K562 (cell line): ENCODE measurements at regions of chr12 and their contacts with region 1.

Region 1: DNA sequence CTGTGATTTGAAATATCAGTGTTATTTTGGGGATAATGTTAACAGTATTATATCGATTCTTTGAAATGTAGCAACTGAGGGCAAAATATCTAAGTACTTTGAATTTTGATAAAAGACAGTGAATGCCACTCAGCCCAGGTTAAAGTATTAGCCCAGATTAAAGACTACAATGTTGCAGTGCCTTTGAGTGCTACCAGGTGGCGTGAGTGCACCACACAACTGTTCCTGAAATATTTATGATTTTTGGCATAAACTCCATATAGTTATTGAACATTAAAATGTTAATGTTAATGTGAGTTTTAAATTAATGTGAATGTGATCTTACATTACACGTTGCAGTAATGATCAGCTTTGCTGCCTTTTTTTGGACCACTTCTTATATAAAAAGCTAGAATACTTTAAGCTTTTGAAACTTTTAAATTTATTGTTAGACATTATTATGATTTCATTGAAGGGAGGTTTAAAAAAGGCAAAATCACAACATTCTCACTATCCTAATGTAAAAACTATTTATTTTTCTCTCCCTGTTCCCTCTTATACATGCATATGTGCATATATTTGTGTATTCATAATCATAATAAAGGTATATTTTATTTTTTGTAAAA is 22.5 kb downstream of the MRPS35 start:
- DNase-seq: peak; percentile 37 to 49 (median 40)
- ATAC-seq: peak; percentile 77
- H3K4me3 ChIP-seq: no peak overlapping the region
- H3K27ac ChIP-seq: no peak overlapping the region
- H3K4me1 ChIP-seq: no peaks in the 10 kb centered on the region
- H3K27me3 ChIP-seq: no peaks in the 10 kb centered on the region
- CTCF ChIP-seq: peak; percentile 75 to 89 (median 80)
- EP300 ChIP-seq: no peak
- POLR2A ChIP-seq: no peak
- RAD21 ChIP-seq: peak; percentile 91 to 93

Region 2: GRCh38 chr12:27635349-27635972 is 97.7 kb before region 1 on chr12:
- CTCF ChIA-PET with region 1: no interaction called
- POLR2A ChIA-PET with region 1: no interaction called
- in situ Hi-C with region 1: no loop called
- intact Hi-C with region 1: no loop called
- DNase-seq: peak in 2 of 4 experiments; percentile 18 to 21
- ATAC-seq: peak; percentile 42; the same call in 1 of the 3 replicates
- H3K4me3 ChIP-seq: no peak overlapping the region
- H3K27ac ChIP-seq: no peak overlapping the region
- H3K4me1 ChIP-seq: no peaks in the 10 kb centered on the region
- H3K27me3 ChIP-seq: peaks cover 0 to 5% of the 10 kb centered on the region in 2 experiments; a peak in 1 of 5 replicates
- CTCF ChIP-seq: peak; percentile 34 to 67 (median 42); a peak in 4 of 6 replicates
- EP300 ChIP-seq: no peak
- POLR2A ChIP-seq: no peak
- RAD21 ChIP-seq: peak; percentile 64 to 76

Region 3: DNA sequence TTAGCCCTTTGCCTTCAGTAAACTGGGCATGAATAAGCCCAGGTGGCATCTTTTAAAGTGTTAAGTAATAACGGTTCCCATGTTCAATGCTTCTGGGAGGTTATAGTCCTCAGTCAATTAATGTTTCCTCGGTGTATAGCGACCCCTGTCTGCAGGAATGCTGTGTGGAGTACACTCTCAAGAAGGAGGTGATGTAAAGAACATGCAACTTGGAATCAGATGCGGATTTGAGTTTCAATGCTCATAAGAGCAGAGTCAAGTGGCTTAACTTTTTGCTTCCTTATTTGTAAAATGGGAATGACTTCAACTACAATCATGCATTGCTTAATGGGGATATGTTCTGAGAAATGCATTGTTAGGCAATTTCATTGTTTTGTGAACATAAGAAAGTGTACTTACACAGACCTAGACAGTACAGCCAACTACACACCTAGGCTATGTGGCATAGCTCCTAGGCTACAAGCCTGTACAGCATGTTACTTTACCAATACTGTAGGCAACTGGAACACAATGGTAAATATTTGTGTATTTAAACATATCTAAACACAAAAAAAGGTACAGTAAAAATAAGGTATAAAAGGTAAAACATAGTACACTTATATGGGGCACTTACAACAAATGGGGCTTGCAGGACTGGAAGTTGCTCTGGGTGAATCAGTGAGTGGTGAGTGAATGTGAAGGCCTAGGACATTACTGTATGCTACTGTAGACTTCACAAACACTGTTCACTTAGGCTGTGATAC is 29.3 kb before region 1 on chr12:
- CTCF ChIA-PET with region 1: no interaction called
- POLR2A ChIA-PET with region 1: no interaction called
- in situ Hi-C with region 1: no loop called
- intact Hi-C with region 1: no loop called
- DNase-seq: peak; percentile 47 to 82 (median 58)
- ATAC-seq: peak; percentile 96
- H3K4me3 ChIP-seq: no peak overlapping the region
- H3K27ac ChIP-seq: no peak overlapping the region
- H3K4me1 ChIP-seq: peaks cover 0 to 3% of the 10 kb centered on the region in 2 experiments; a peak in 1 of 5 replicates
- H3K27me3 ChIP-seq: peaks cover 6 to 19% of the 10 kb centered on the region in 2 experiments; a peak in 4 of 5 replicates
- CTCF ChIP-seq: peak; percentile 79 to 91 (median 82)
- EP300 ChIP-seq: peak; percentile 82
- POLR2A ChIP-seq: no peak
- RAD21 ChIP-seq: peak; percentile 78 to 80

Region 4: DNA sequence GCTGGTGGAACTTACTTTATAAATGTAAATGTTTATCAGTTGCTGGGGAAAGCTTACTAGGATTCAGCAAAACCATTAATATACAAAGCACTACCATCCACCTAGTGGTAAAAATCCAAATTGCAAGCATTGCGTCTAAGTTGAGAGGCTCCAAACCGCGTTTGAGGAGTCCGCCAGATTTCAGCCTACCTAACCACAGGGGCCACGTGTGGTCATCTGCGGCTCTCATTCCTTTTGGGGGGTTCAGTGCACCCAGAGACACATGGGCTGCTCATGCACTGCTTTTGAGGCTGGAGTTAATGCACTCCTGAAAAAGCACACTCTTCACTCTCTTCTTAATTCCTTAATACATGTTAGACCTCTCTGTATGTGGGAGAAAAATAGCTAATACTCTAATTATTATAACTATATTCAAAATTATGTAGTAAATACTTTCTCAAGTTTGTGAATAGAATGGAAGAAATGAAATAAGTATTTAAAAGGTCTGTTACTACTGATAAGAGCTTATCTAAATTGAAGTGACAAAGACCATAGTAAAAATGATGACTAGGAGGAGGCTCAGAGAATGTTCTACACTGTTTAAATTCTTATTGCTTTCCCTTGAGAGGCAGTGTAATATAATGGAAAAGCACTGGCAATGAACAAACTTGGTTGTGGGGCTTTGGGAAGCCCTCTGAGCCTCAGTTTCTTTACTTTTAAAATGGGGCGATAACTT is 88.3 kb after region 1 on chr12:
- CTCF ChIA-PET with region 1: interaction called, 3 read pairs
- POLR2A ChIA-PET with region 1: no interaction called
- in situ Hi-C with region 1: no loop called
- intact Hi-C with region 1: loop called (anchors 2 kb)
- DNase-seq: peak; percentile 65 to 86 (median 70)
- ATAC-seq: peak; percentile 86
- H3K4me3 ChIP-seq: no peak overlapping the region
- H3K27ac ChIP-seq: no peak overlapping the region
- H3K4me1 ChIP-seq: peaks cover 0 to 26% of the 10 kb centered on the region in 2 experiments; a peak in 3 of 5 replicates
- H3K27me3 ChIP-seq: no peaks in the 10 kb centered on the region
- CTCF ChIP-seq: peak; percentile 46 to 79 (median 74); a peak in 5 of 6 replicates
- EP300 ChIP-seq: peak; percentile 25; the same call in 1 of the 2 replicates
- POLR2A ChIP-seq: no peak
- RAD21 ChIP-seq: peak in 1 of 2 experiments; percentile 62; a peak in 3 of 4 replicates

Region 5: GRCh38 chr12:27940756-27941402 is 207.7 kb after region 1 on chr12:
- CTCF ChIA-PET with region 1: interaction called, 20 read pairs
- POLR2A ChIA-PET with region 1: interaction called, 3 read pairs
- in situ Hi-C with region 1: loop called (anchors 5 kb)
- intact Hi-C with region 1: loop called (anchors 1 kb)
- DNase-seq: peak; percentile 60 to 87 (median 64)
- ATAC-seq: peak; percentile 96
- H3K4me3 ChIP-seq: no peak overlapping the region
- H3K27ac ChIP-seq: no peak overlapping the region
- H3K4me1 ChIP-seq: no peaks in the 10 kb centered on the region
- H3K27me3 ChIP-seq: no peaks in the 10 kb centered on the region
- CTCF ChIP-seq: peak; percentile 86 to 90 (median 89)
- EP300 ChIP-seq: no peak
- POLR2A ChIP-seq: no peak
- RAD21 ChIP-seq: peak; percentile 90 to 93

Region 6: GRCh38 chr12:27946421-27946820 is 213.3 kb after region 1 on chr12:
- CTCF ChIA-PET with region 1: interaction called, 20 read pairs
- POLR2A ChIA-PET with region 1: interaction called, 3 read pairs
- in situ Hi-C with region 1: loop called (anchors 5 kb)
- intact Hi-C with region 1: no loop called
- DNase-seq: no peak
- ATAC-seq: no peak
- H3K4me3 ChIP-seq: no peak overlapping the region
- H3K27ac ChIP-seq: no peak overlapping the region
- H3K4me1 ChIP-seq: no peaks in the 10 kb centered on the region
- H3K27me3 ChIP-seq: no peaks in the 10 kb centered on the region
- CTCF ChIP-seq: no peak
- EP300 ChIP-seq: no peak
- POLR2A ChIP-seq: no peak
- RAD21 ChIP-seq: no peak

Region 7: GRCh38 chr12:27975244-27976136 is 242.3 kb after region 1 on chr12:
- CTCF ChIA-PET with region 1: no interaction called
- POLR2A ChIA-PET with region 1: no interaction called
- in situ Hi-C with region 1: no loop called
- intact Hi-C with region 1: no loop called
- DNase-seq: peak; percentile 66 to 85 (median 72)
- ATAC-seq: peak; percentile 90
- H3K4me3 ChIP-seq: peak overlapping the region; percentile 46
- H3K27ac ChIP-seq: 0 out of 3 replicates have a peak overlapping the region, but pooled peaks have one; percentile 25
- H3K4me1 ChIP-seq: peaks cover 2 to 17% of the 10 kb centered on the region in 2 experiments; a peak in 2 of 5 replicates
- H3K27me3 ChIP-seq: peaks cover 4 to 7% of the 10 kb centered on the region in 2 experiments; a peak in 3 of 5 replicates
- CTCF ChIP-seq: 0 out of 6 replicates have a peak, but pooled peaks of 1 of the 3 experiments have one; percentile 2
- EP300 ChIP-seq: no peak; the same call in 1 of the 2 replicates
- POLR2A ChIP-seq: no peak
- RAD21 ChIP-seq: peak in 1 of 2 experiments; percentile 19; a peak in 1 of 4 replicates

Region 8: GRCh38 chr12:28872654-28873268 is 1139.6 kb after region 1 on chr12:
- CTCF ChIA-PET with region 1: interaction called, 12 read pairs
- POLR2A ChIA-PET with region 1: no interaction called
- in situ Hi-C with region 1: no loop called
- intact Hi-C with region 1: loop called (anchors 10 kb)
- DNase-seq: peak; percentile 37 to 67 (median 48)
- ATAC-seq: peak; percentile 81
- H3K4me3 ChIP-seq: no peak overlapping the region
- H3K27ac ChIP-seq: no peak overlapping the region
- H3K4me1 ChIP-seq: no peaks in the 10 kb centered on the region
- H3K27me3 ChIP-seq: no peaks in the 10 kb centered on the region
- CTCF ChIP-seq: peak; percentile 59 to 76 (median 74)
- EP300 ChIP-seq: no peak
- POLR2A ChIP-seq: no peak
- RAD21 ChIP-seq: peak; percentile 60 to 79